CD8-positive, alpha-beta T cell (primary cell): ENCODE measurements at regions of chr7 and their contacts with region 1.

Region 1: GRCh38 chr7:127708788-127709187 is 56.8 kb downstream of the SND1 start:
- DNase-seq: peak; percentile 47 to 83 (median 75)
- ATAC-seq: peak; percentile 76
- H3K4me3 ChIP-seq: no peak overlapping the region
- H3K4me3 Mint-ChIP-seq: no peak overlapping the region
- H3K27ac ChIP-seq: no peak overlapping the region
- H3K27ac Mint-ChIP-seq: no peak overlapping the region
- H3K4me1 ChIP-seq: no peaks in the 10 kb centered on the region
- H3K4me1 Mint-ChIP-seq: no peaks in the 10 kb centered on the region
- H3K27me3 ChIP-seq: no peaks in the 10 kb centered on the region
- H3K27me3 Mint-ChIP-seq: no peaks in the 10 kb centered on the region
- CTCF ChIP-seq: peak; percentile 60

Region 2: GRCh38 chr7:127733986-127734385 is 25.2 kb after region 1 on chr7:
- CTCF ChIA-PET with region 1: interaction called, 12 read pairs
- POLR2A ChIA-PET with region 1: interaction called, 3 read pairs
- intact Hi-C with region 1: no loop called
- DNase-seq: no peak
- ATAC-seq: no peak
- H3K4me3 ChIP-seq: no peak overlapping the region
- H3K4me3 Mint-ChIP-seq: no peak overlapping the region
- H3K27ac ChIP-seq: no peak overlapping the region
- H3K27ac Mint-ChIP-seq: no peak overlapping the region
- H3K4me1 ChIP-seq: no peaks in the 10 kb centered on the region
- H3K4me1 Mint-ChIP-seq: peaks cover 3% of the 10 kb centered on the region
- H3K27me3 ChIP-seq: no peaks in the 10 kb centered on the region
- H3K27me3 Mint-ChIP-seq: no peaks in the 10 kb centered on the region
- CTCF ChIP-seq: no peak

Region 3: DNA sequence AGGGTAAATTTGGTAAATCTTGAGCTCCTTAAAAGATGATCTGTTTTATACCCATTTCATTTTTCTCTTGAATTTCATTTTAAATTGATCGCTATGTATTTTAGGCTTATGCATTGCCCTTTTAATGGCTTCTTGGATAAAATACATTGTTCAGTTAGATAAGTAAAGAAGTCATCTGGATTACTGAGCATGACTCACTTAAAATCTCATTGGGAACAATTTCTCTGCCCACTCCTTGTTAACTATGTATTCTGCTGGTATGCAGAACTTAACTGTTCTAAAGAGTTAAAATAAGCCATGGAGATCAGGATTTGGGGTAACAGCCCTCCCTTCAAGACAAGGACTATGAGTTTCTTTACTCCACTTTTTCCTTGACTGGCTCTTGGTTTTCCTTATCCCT is 77.4 kb after region 1 on chr7:
- CTCF ChIA-PET with region 1: no interaction called
- POLR2A ChIA-PET with region 1: no interaction called
- intact Hi-C with region 1: no loop called
- DNase-seq: no peak
- ATAC-seq: no peak
- H3K4me3 ChIP-seq: no peak overlapping the region
- H3K4me3 Mint-ChIP-seq: no peak overlapping the region
- H3K27ac ChIP-seq: no peak overlapping the region
- H3K27ac Mint-ChIP-seq: no peak overlapping the region
- H3K4me1 ChIP-seq: peaks cover 4% of the 10 kb centered on the region
- H3K4me1 Mint-ChIP-seq: peaks cover 41% of the 10 kb centered on the region
- H3K27me3 ChIP-seq: no peaks in the 10 kb centered on the region
- H3K27me3 Mint-ChIP-seq: no peaks in the 10 kb centered on the region
- CTCF ChIP-seq: no peak

Region 4: DNA sequence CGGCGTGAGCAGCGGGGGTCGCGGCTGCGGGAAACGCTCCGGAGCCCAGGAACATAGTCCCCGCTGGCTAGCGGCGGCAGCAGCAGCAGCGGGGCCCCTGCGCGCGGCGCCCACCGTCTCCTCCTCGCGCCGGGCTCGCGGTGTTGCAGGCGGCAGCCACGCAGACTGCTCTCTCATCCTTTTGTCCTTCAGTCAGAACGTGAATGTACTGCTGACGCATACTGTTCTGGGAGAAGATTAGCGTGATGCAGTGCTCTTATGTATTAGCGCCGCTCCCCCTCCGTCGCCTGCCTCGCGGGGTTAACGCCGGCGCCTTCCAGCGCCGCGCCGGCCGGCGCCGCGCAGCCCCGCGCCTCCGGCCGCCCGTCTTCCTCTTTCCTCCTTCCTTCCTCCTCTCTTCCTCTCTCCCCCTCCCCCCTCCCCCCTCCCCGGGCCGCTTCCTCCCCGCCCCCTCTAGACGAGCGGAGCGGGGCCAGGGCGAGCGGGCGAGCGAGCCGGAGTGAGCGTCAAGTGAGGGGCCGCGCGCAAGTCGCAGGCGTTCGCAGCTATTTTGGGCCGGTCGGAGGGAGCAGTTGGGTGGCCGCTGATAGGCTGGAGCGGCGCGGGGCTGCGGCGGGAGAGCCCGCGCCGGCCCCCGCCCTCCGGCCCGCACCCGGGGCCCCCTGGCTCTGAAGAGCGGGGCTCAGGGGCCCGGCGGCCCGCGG is 323.3 kb after region 1 on chr7:
- CTCF ChIA-PET with region 1: interaction called, 3 read pairs
- POLR2A ChIA-PET with region 1: no interaction called
- intact Hi-C with region 1: loop called in 1 of 2 experiments (anchors 10 kb)
- DNase-seq: peak; percentile 12 to 79 (median 48)
- ATAC-seq: peak; percentile 94
- H3K4me3 ChIP-seq: peak overlapping the region; percentile 22 to 37
- H3K4me3 Mint-ChIP-seq: peak overlapping the region; percentile 92
- H3K27ac ChIP-seq: no peak overlapping the region
- H3K27ac Mint-ChIP-seq: no peak overlapping the region
- H3K4me1 ChIP-seq: no peaks in the 10 kb centered on the region
- H3K4me1 Mint-ChIP-seq: peaks cover 27% of the 10 kb centered on the region
- H3K27me3 ChIP-seq: peaks cover 0 to 6% of the 10 kb centered on the region in 2 experiments
- H3K27me3 Mint-ChIP-seq: peaks cover 4% of the 10 kb centered on the region
- CTCF ChIP-seq: no peak

Region 5: GRCh38 chr7:128203710-128204214 is 495.0 kb after region 1 on chr7:
- CTCF ChIA-PET with region 1: interaction called, 306 read pairs
- POLR2A ChIA-PET with region 1: no interaction called
- intact Hi-C with region 1: no loop called
- DNase-seq: peak in 1 of 9 experiments; percentile 31
- ATAC-seq: no peak
- H3K4me3 ChIP-seq: no peak overlapping the region
- H3K4me3 Mint-ChIP-seq: no peak overlapping the region
- H3K27ac ChIP-seq: no peak overlapping the region
- H3K27ac Mint-ChIP-seq: no peak overlapping the region
- H3K4me1 ChIP-seq: peaks cover 15% of the 10 kb centered on the region
- H3K4me1 Mint-ChIP-seq: peaks cover 14% of the 10 kb centered on the region
- H3K27me3 ChIP-seq: peaks cover 0 to 12% of the 10 kb centered on the region in 2 experiments
- H3K27me3 Mint-ChIP-seq: peaks cover 40% of the 10 kb centered on the region
- CTCF ChIP-seq: no peak

Region 6: DNA sequence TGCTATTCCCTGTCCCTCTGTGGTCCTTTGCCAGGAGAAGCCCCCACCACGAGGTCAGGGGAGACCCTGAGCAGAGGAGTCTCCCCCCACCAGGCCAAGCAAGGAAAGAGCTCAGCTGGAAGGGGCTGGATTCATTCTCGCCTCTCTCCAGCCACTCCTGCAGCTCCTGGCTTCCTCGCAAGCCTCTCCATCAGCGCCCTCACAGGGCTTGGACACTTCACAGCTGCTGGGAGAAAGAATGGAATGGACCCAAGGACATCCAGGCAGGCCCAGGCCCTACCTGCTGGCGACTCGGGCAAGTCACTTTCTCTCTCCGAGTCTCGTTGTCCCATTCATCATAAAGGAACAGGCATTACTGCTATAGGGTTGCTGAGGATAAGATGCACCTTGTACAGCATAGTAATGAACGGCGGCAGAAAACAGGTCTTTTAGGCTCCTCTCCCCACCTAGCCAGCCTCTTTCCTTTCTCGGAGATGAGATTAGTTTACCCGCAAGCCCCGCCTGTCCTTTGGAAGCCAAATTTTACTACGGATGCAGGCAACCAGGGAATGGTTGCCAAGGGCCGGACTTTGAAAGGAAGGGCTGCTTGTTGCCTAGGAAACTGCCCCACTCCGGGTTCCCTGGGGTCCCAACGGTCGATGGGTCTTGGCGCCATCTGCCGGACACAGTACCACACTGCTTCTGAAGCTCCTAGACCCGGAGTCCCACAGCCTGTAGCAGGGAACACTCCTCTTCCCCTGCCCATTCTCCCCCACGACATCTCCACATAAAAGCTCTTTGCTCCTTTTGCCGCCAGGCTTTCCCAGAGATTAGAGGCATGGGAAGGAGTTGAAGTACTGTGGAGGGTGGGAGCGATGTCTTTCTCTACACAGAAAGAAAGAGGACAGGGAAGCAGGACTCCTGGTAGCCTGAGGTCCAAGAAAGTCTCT is 678.7 kb after region 1 on chr7:
- CTCF ChIA-PET with region 1: interaction called, 4 read pairs
- POLR2A ChIA-PET with region 1: no interaction called
- intact Hi-C with region 1: loop called (anchors 1 to 2 kb)
- DNase-seq: peak; percentile 49 to 77 (median 71)
- ATAC-seq: peak; percentile 98
- H3K4me3 ChIP-seq: no peak overlapping the region
- H3K4me3 Mint-ChIP-seq: no peak overlapping the region
- H3K27ac ChIP-seq: no peak overlapping the region
- H3K27ac Mint-ChIP-seq: no peak overlapping the region
- H3K4me1 ChIP-seq: no peaks in the 10 kb centered on the region
- H3K4me1 Mint-ChIP-seq: no peaks in the 10 kb centered on the region
- H3K27me3 ChIP-seq: no peaks in the 10 kb centered on the region
- H3K27me3 Mint-ChIP-seq: no peaks in the 10 kb centered on the region
- CTCF ChIP-seq: peak; percentile 73